PC-9 (cell line): ENCODE measurements at regions of chr22 and their contacts with region 1.

Region 1: GRCh38 chr22:26364066-26365015 is 64.7 kb upstream of the ASPHD2 start:
- DNase-seq: peak; percentile 37 to 55
- H3K4me3 ChIP-seq: no peak overlapping the region
- H3K27ac ChIP-seq: no peak overlapping the region
- H3K4me1 ChIP-seq: no peaks in the 10 kb centered on the region
- H3K27me3 ChIP-seq: peaks cover 19% of the 10 kb centered on the region; the same call in 1 of the 2 replicates
- CTCF ChIP-seq: peak; percentile 65

Region 2: DNA sequence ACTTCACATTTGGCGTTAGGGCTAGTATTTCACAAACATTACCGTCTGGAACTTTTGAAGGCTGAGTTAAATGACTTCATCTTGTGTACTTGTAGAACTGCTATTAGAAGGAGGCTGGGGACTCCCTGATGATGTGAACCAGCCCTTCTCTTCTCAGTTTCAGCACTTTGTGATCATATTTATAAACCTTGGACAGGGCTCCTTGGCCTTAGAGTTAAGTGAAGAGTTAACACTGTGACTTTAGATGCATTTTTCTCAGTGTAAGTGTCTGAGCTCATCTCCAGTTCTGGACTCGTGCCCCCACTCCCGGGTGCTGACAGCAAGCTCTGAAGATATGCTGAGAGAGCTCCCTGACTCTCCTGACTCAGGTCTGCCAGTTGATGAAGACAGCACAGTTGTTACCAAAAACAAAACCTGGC is 301.5 kb after region 1 on chr22:
- CTCF ChIA-PET with region 1: interaction called, 13 read pairs
- POLR2A ChIA-PET with region 1: no interaction called
- intact Hi-C with region 1: no loop called
- DNase-seq: no peak
- H3K4me3 ChIP-seq: no peak overlapping the region
- H3K27ac ChIP-seq: no peak overlapping the region
- H3K4me1 ChIP-seq: no peaks in the 10 kb centered on the region
- H3K27me3 ChIP-seq: no peaks in the 10 kb centered on the region
- CTCF ChIP-seq: peak; percentile 23; the same call in 1 of the 2 replicates